Activated CD8-positive, alpha-beta T cell treated with anti-CD3 and anti-CD28 coated beads for 36 hours (primary cell): ENCODE measurements at regions of chr16 and their contacts with region 1.

Region 1: GRCh38 chr16:53503270-53503923 is 388 bp upstream of the AKTIP start:
- DNase-seq: peak; percentile 100
- ATAC-seq: peak; percentile 92
- H3K4me3 Mint-ChIP-seq: peak overlapping the region; percentile 95
- H3K27ac Mint-ChIP-seq: peak overlapping the region; percentile 88
- H3K4me1 Mint-ChIP-seq: peaks cover 46% of the 10 kb centered on the region
- H3K27me3 Mint-ChIP-seq: no peaks in the 10 kb centered on the region
- CTCF ChIP-seq: no peak

Region 2: GRCh38 chr16:53457670-53458069 is 45.7 kb before region 1 on chr16:
- CTCF ChIA-PET with region 1: interaction called, 6 read pairs
- POLR2A ChIA-PET with region 1: interaction called, 3 read pairs
- intact Hi-C with region 1: loop called (anchors 5 kb)
- DNase-seq: peak; percentile 84
- ATAC-seq: peak; percentile 85
- H3K4me3 Mint-ChIP-seq: peak overlapping the region; percentile 68
- H3K27ac Mint-ChIP-seq: peak overlapping the region; percentile 93
- H3K4me1 Mint-ChIP-seq: peaks cover 87% of the 10 kb centered on the region
- H3K27me3 Mint-ChIP-seq: no peaks in the 10 kb centered on the region
- CTCF ChIP-seq: no peak

Region 3: DNA sequence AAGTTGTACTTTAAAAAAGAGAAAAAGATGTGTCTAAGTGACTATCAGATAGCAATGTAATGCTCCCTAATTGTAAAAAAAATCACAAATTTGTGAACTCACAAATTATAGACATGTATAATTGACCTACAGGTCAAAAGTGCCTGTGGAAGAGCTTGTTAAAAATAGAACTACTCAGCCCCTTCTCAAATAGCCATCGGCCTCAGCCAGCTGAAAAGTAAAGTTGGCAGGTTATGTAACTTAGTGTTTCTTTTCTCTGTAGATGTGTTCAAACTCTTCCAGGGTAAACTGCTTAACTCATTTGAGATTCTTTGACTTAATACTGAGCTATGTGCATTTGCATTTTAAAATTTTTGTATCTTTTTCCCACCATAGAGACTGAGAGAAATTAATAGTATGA is 13.6 kb before region 1 on chr16:
- CTCF ChIA-PET with region 1: interaction called, 10 read pairs
- POLR2A ChIA-PET with region 1: interaction called, 8 read pairs
- intact Hi-C with region 1: no loop called
- DNase-seq: no peak
- ATAC-seq: no peak
- H3K4me3 Mint-ChIP-seq: no peak overlapping the region
- H3K27ac Mint-ChIP-seq: peak overlapping the region; percentile 44
- H3K4me1 Mint-ChIP-seq: peaks cover 33% of the 10 kb centered on the region
- H3K27me3 Mint-ChIP-seq: no peaks in the 10 kb centered on the region
- CTCF ChIP-seq: no peak